ENCODE measurements at regions of chr15 and their contacts with region 1.

Region 1: GRCh38 chr15:93121973-93122910 is 33.2 kb upstream of the RGMA start:
- DNase-seq: peak in 2 of 5 donors; percentile 29 to 41
- ATAC-seq: peak in 3 of 4 donors; percentile 24 to 50 (median 36)
- H3K4me3 ChIP-seq: no peak overlapping the region
- H3K27ac ChIP-seq: peak overlapping the region in 3 of 12 donors; percentile 20 to 53 (median 49)
- H3K4me1 ChIP-seq: peaks cover 0 to 17% (median 0%) of the 10 kb centered on the region in 12 donors
- H3K27me3 ChIP-seq: peaks cover 0 to 4% (median 0%) of the 10 kb centered on the region in 9 donors
- CTCF ChIP-seq: no peak
- POLR2A ChIP-seq: no peak

Region 2: DNA sequence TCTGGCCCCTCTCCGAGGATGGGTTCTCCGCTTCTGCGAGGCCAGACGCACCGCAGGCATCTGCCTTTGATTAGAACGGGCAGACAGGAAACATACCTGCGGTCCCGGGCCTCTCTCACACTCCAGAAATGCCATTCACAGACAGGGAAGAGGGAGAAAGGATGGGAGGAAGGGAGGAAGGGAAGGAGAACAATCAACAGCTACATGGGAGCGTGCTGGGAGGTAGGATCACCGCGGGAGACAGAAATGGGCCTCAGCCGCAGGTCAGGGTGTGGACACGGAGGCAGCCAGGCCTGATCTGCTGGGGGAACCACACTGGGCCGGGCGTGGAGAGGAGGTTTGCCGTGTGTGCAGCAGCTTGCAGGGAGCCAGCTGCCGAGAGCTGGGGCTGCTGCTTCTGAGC is 57.5 kb after region 1 on chr15:
- intact Hi-C with region 1: loop called in 1 of 10 experiments (anchors 10 kb)
- DNase-seq: no peak
- ATAC-seq: no peak
- H3K4me3 ChIP-seq: no peak overlapping the region
- H3K27ac ChIP-seq: no peak overlapping the region
- H3K4me1 ChIP-seq: peaks cover 0 to 12% (median 0%) of the 10 kb centered on the region in 12 donors
- H3K27me3 ChIP-seq: no peaks in the 10 kb centered on the region
- CTCF ChIP-seq: no peak
- POLR2A ChIP-seq: no peak

Measured in heart left ventricle (tissue), 16 donors.